ENCODE measurements at regions of chr6 and their contacts with region 1.

Region 1: DNA sequence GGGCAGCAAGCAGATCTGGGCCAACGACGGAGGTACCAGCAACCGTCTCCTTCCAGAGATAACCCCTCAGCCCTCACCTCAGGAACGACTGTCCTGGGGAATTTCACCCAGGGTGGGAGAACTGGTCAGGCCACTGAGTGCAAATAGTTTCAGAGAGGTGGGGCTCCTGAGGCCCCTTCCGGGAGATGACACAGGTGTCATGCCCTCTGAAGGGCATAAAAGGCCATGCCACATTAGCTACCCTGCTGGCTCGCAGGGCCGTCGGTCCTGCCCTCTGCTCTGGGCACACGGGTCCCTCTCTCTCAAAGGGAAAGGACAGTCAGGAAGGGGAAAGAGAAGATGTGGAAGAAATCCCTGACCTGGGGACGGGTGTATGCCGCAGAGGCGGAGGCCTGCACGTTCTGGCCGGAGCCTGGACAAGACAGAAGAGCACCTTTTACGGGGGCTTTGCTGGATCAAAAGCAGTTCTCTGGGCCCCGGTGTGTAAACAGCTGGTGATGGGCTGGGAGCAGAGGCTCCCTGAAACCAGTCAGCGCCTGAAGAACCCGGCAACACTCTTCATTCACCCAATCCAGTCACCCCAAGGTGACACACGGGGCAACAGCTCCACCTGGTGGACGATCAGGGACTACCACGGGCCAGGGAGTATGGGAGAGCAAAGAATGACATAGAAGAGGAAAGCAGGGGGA is 6.4 kb upstream of the TAF8 start:
- DNase-seq: peak; percentile 87
- H3K4me3 Mint-ChIP-seq: peak overlapping the region; percentile 70
- H3K27ac Mint-ChIP-seq: peak overlapping the region; percentile 83
- H3K4me1 Mint-ChIP-seq: peaks cover 82% of the 10 kb centered on the region
- H3K27me3 Mint-ChIP-seq: no peaks in the 10 kb centered on the region

Region 2: GRCh38 chr6:41408576-41408975 is 635.4 kb before region 1 on chr6:
- intact Hi-C with region 1: no loop called
- DNase-seq: no peak
- H3K4me3 Mint-ChIP-seq: no peak overlapping the region
- H3K27ac Mint-ChIP-seq: no peak overlapping the region
- H3K4me1 Mint-ChIP-seq: no peaks in the 10 kb centered on the region
- H3K27me3 Mint-ChIP-seq: peaks cover 20% of the 10 kb centered on the region

Region 3: GRCh38 chr6:41801380-41801779 is 242.6 kb before region 1 on chr6:
- intact Hi-C with region 1: loop called (anchors 1 kb)
- DNase-seq: no peak
- H3K4me3 Mint-ChIP-seq: no peak overlapping the region
- H3K27ac Mint-ChIP-seq: no peak overlapping the region
- H3K4me1 Mint-ChIP-seq: no peaks in the 10 kb centered on the region
- H3K27me3 Mint-ChIP-seq: no peaks in the 10 kb centered on the region

Region 4: GRCh38 chr6:41846666-41847237 is 197.2 kb before region 1 on chr6:
- intact Hi-C with region 1: loop called (anchors 1 kb)
- DNase-seq: peak; percentile 31
- H3K4me3 Mint-ChIP-seq: no peak overlapping the region
- H3K27ac Mint-ChIP-seq: no peak overlapping the region
- H3K4me1 Mint-ChIP-seq: peaks cover 11% of the 10 kb centered on the region
- H3K27me3 Mint-ChIP-seq: no peaks in the 10 kb centered on the region

Region 5: DNA sequence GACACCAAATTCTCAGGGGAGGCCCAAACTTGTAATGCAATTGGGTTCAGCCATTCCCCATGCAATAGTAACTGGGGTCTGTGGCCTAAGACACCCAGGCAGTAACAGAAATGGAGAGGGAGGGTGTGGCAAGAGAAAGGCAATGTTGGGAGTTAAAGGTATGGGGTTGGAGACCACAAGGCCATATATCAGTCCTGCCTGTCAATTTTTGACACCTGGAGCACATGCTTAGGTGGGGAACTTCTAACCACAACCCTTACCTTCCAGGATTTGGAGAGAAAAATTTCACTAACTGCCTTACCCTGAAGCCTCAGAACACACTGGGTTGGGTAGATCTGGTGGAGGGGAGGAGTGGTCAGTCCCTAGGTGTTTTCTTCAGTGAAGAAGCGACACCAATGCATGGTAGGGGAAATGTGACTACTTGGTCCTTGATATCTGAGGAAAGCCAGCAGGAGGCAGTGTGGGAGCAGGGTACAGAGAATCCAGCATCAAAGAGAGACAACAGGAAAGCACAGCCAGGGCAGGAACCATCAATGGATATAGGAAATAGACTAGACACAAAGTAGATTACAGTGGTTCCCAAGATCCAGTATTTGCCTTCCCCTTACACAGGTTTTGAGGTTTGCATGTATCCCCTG is 141.9 kb before region 1 on chr6:
- intact Hi-C with region 1: loop called (anchors 1 kb)
- DNase-seq: peak; percentile 31
- H3K4me3 Mint-ChIP-seq: no peak overlapping the region
- H3K27ac Mint-ChIP-seq: no peak overlapping the region
- H3K4me1 Mint-ChIP-seq: peaks cover 32% of the 10 kb centered on the region
- H3K27me3 Mint-ChIP-seq: no peaks in the 10 kb centered on the region

Region 6: DNA sequence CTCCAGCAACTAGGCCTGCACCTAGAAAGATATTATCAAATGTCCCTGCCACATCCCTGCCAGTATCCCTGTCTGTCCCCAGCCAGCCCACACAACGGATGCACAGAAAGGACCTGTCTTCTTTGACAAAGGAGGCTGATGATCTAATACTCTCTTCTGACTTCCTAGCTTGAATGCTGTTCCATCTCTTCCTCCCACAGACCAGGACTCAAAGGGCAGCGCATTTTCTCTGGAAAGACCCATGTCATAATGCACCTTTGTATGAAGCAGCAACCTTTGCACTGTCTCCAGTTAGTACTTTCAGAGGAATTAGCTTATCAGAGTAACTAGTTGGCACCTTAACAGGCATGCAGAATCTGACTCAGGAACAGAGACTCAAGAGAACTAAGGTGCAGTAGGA is 46.9 kb before region 1 on chr6:
- intact Hi-C with region 1: no loop called
- DNase-seq: no peak
- H3K4me3 Mint-ChIP-seq: no peak overlapping the region
- H3K27ac Mint-ChIP-seq: peak overlapping the region; percentile 3
- H3K4me1 Mint-ChIP-seq: peaks cover 13% of the 10 kb centered on the region
- H3K27me3 Mint-ChIP-seq: no peaks in the 10 kb centered on the region